Calu3 (cell line): ENCODE measurements at regions of chr9 and their contacts with region 1.

Region 1: GRCh38 chr9:87497604-87498045 is at the start of gene DAPK1:
- DNase-seq: peak; percentile 76
- H3K4me3 Mint-ChIP-seq: peak within 1 kb of the TSS; percentile 91
- H3K27ac Mint-ChIP-seq: peak within 1 kb of the TSS; percentile 50
- H3K4me1 Mint-ChIP-seq: peaks cover 19% of the 10 kb centered on the region
- H3K27me3 Mint-ChIP-seq: no peaks in the 10 kb centered on the region
- CTCF ChIP-seq: no peak
- total RNA-seq, gene DAPK1: 133 and 166 TPM in 2 replicates

Region 2: DNA sequence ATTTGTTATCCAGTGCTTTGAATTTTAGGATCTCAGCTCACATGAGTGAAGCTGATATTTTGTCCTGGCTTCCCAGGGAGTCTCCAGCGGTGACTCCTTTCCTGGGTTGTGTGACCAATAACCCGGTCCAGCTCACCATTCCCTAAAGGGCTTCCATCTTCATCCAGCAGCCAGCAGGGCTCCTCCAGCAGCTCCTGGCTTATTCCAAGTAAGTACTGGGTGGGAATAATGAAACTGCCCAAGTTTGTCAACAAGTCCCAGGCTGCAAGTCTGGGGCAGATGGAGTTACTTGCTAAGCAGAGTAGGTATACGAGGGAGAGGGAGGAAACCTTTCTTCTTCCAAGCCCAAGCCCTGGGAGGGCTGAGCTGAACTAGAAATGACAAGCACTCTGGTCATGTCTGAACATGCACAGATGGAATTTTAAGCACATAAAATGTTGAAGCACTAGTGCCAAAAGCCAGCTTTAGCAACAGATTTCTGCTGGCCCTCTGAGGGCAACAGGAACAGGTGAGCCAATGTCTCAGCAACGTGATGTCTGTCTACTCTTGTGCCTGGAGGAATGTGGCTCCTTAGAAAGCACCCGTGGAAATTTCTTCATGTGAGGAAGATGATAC is 153.7 kb before region 1 on chr9:
- CTCF ChIA-PET with region 1: no interaction called
- intact Hi-C with region 1: no loop called
- DNase-seq: no peak
- H3K4me3 Mint-ChIP-seq: no peak overlapping the region
- H3K27ac Mint-ChIP-seq: no peak overlapping the region
- H3K4me1 Mint-ChIP-seq: no peaks in the 10 kb centered on the region
- H3K27me3 Mint-ChIP-seq: no peaks in the 10 kb centered on the region
- CTCF ChIP-seq: no peak

Region 3: GRCh38 chr9:87375397-87376073 is 122.1 kb before region 1 on chr9:
- CTCF ChIA-PET with region 1: interaction called, 7 read pairs
- intact Hi-C with region 1: loop called (anchors 10 kb)
- DNase-seq: peak; percentile 6
- H3K4me3 Mint-ChIP-seq: no peak overlapping the region
- H3K27ac Mint-ChIP-seq: no peak overlapping the region
- H3K4me1 Mint-ChIP-seq: peaks cover 51% of the 10 kb centered on the region
- H3K27me3 Mint-ChIP-seq: no peaks in the 10 kb centered on the region
- CTCF ChIP-seq: no peak

Region 4: GRCh38 chr9:87405677-87406542 is 91.7 kb before region 1 on chr9:
- CTCF ChIA-PET with region 1: no interaction called
- intact Hi-C with region 1: loop called (anchors 2 kb)
- DNase-seq: peak; percentile 41
- H3K4me3 Mint-ChIP-seq: peak overlapping the region; percentile 19
- H3K27ac Mint-ChIP-seq: peak overlapping the region; percentile 98
- H3K4me1 Mint-ChIP-seq: peaks cover 47% of the 10 kb centered on the region
- H3K27me3 Mint-ChIP-seq: no peaks in the 10 kb centered on the region
- CTCF ChIP-seq: no peak

Region 5: DNA sequence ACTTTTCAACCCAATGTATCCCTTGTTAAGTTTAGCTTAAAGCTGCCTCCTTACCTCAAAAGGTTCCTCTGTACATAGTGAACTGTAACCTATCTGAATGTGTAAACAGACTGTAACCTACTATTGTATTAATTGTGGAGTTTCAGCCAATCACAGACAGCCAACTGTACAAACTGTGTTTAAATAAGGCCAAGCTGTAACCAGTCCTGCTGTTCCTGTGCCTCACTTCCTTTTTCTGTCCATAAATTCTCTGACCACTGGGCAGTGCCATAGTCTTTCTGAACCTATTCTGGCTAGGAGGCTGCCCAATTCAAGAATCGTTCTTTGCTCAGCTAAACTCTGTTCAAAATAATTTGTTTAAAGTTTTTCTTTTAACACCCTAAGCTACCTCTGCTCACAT is 74.6 kb before region 1 on chr9:
- CTCF ChIA-PET with region 1: interaction called, 3 read pairs
- intact Hi-C with region 1: loop called (anchors 5 kb)
- DNase-seq: no peak
- H3K4me3 Mint-ChIP-seq: no peak overlapping the region
- H3K27ac Mint-ChIP-seq: peak overlapping the region; percentile 77
- H3K4me1 Mint-ChIP-seq: peaks cover 14% of the 10 kb centered on the region
- H3K27me3 Mint-ChIP-seq: no peaks in the 10 kb centered on the region
- CTCF ChIP-seq: no peak

Region 6: DNA sequence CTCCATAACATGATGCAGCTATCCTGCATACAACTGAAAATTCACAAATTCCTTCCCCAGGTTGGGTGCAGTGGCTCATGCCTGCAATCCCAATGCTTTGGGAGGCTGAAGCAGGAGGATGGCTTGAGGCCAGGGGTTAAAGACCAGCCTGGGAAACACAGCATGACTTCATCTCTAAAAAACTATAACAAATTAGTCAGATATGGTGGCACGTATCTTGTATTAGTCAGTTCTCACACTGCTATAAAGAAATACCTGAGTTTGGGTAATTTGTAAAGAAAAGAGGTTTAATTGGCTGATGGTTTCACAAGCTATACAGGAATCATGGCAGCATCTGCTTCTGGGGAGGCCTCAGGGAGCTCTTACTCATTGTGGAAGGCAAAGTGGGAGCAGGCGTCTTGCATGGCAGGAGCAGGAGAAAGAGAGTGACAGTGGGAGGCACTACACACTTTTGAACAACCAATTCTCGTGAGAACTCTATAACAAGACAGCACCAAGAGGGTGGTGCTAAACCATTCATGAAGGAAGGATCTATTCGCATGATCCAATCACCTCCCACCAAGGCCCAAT is 56.3 kb before region 1 on chr9:
- CTCF ChIA-PET with region 1: no interaction called
- intact Hi-C with region 1: no loop called
- DNase-seq: no peak
- H3K4me3 Mint-ChIP-seq: no peak overlapping the region
- H3K27ac Mint-ChIP-seq: no peak overlapping the region
- H3K4me1 Mint-ChIP-seq: no peaks in the 10 kb centered on the region
- H3K27me3 Mint-ChIP-seq: no peaks in the 10 kb centered on the region
- CTCF ChIP-seq: no peak

Region 7: GRCh38 chr9:87570000-87570908 is 72.6 kb after region 1 on chr9:
- CTCF ChIA-PET with region 1: no interaction called
- intact Hi-C with region 1: loop called (anchors 10 kb)
- DNase-seq: no peak
- H3K4me3 Mint-ChIP-seq: peak overlapping the region; percentile 55
- H3K27ac Mint-ChIP-seq: peak overlapping the region; percentile 75
- H3K4me1 Mint-ChIP-seq: peaks cover 69% of the 10 kb centered on the region
- H3K27me3 Mint-ChIP-seq: no peaks in the 10 kb centered on the region
- CTCF ChIP-seq: no peak

Region 8: GRCh38 chr9:87878989-87879511 is 381.4 kb after region 1 on chr9:
- CTCF ChIA-PET with region 1: no interaction called
- intact Hi-C with region 1: no loop called
- DNase-seq: no peak
- H3K4me3 Mint-ChIP-seq: no peak overlapping the region
- H3K27ac Mint-ChIP-seq: no peak overlapping the region
- H3K4me1 Mint-ChIP-seq: peaks cover 8% of the 10 kb centered on the region
- H3K27me3 Mint-ChIP-seq: no peaks in the 10 kb centered on the region
- CTCF ChIP-seq: no peak